Breast epithelium (tissue), 4 donors: ENCODE measurements at regions of chr3 and their contacts with region 1.

Region 1: GRCh38 chr3:31895471-31895870 is 85.6 kb downstream of the OSBPL10 start:
- DNase-seq: no peak
- H3K4me3 ChIP-seq: no peak overlapping the region
- H3K27ac ChIP-seq: no peak overlapping the region
- H3K4me1 ChIP-seq: no peaks in the 10 kb centered on the region
- H3K27me3 ChIP-seq: no peaks in the 10 kb centered on the region
- CTCF ChIP-seq: no peak
- POLR2A ChIP-seq: no peak

Region 2: DNA sequence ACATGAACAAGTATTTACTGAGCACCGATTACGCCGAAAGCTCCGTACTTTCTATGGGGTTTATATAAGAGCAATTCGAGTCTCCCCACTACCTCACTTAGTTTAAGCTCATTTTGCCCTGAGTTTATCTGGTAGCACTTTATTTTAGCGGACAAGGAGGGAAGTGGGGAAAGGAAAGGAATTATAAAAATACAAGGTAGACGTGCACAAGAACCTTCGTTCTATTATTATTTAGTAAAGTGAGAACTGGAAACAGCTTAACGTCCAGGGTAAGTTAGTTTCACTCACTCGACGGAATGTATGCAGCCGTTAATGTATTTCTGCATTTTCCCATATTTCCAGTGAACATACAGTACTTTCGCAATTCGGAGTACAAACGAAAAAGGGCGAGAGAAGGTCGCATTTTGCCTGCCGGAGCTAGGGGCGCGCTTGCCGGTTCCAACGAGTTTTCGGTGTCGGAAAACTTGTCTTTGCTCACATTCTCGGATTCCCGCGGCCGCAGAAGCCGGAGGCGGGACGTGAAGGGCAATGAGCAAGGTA is 363.9 kb before region 1 on chr3:
- intact Hi-C with region 1: no loop called
- DNase-seq: no peak
- H3K4me3 ChIP-seq: peak overlapping the region; percentile 85 to 95 (median 91)
- H3K27ac ChIP-seq: peak overlapping the region; percentile 98
- H3K4me1 ChIP-seq: no peaks in the 10 kb centered on the region
- H3K27me3 ChIP-seq: no peaks in the 10 kb centered on the region
- CTCF ChIP-seq: no peak
- POLR2A ChIP-seq: no peak

Region 3: GRCh38 chr3:31880020-31880419 is 15.5 kb before region 1 on chr3:
- intact Hi-C with region 1: no loop called
- DNase-seq: no peak
- H3K4me3 ChIP-seq: no peak overlapping the region
- H3K27ac ChIP-seq: no peak overlapping the region
- H3K4me1 ChIP-seq: no peaks in the 10 kb centered on the region
- H3K27me3 ChIP-seq: no peaks in the 10 kb centered on the region
- CTCF ChIP-seq: no peak
- POLR2A ChIP-seq: no peak

Region 4: DNA sequence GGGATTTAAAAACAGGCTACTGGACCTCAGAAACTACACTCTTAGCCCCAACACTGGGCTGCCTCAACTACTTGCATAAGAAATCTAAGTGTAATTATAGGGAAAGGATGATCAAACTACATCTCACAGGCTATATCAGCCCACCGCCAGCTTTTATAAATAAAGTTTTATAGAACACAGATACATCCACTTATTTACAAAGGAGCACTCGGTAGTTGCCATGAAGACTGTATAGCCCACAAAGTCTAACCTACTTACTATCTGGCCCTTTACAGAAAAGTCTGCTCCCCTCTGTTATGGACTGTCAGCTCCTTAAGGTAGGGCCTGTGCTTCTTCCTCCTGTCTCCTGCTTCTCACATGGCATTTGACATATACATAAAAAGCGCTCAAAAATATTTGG is 76.1 kb after region 1 on chr3:
- intact Hi-C with region 1: loop called (anchors 2 kb)
- DNase-seq: no peak
- H3K4me3 ChIP-seq: no peak overlapping the region
- H3K27ac ChIP-seq: peak overlapping the region in 1 of 2 donors; percentile 33
- H3K4me1 ChIP-seq: no peaks in the 10 kb centered on the region
- H3K27me3 ChIP-seq: no peaks in the 10 kb centered on the region
- CTCF ChIP-seq: no peak
- POLR2A ChIP-seq: no peak